Activated T-helper 2 cell treated with anti-CD3 and anti-CD28 coated beads, Interferon-gamma antibody, Interleukin-2, Interleukin-4, amounts not matched to agents 10 μg/mL and 5 μg/mL and 100 μg/mL, durations not matched to agents 14 hours and 24 hours and 36 hours (primary cell): ENCODE measurements at regions of chr1 and their contacts with region 1.

Region 1: GRCh38 chr1:172154551-172154950 is 265.9 kb upstream of the C1orf105 start:
- DNase-seq: no peak
- H3K4me3 Mint-ChIP-seq: peak overlapping the region; percentile 52
- H3K27ac Mint-ChIP-seq: peak overlapping the region; percentile 88
- H3K4me1 Mint-ChIP-seq: peaks cover 15% of the 10 kb centered on the region
- H3K27me3 Mint-ChIP-seq: no peaks in the 10 kb centered on the region

Region 2: DNA sequence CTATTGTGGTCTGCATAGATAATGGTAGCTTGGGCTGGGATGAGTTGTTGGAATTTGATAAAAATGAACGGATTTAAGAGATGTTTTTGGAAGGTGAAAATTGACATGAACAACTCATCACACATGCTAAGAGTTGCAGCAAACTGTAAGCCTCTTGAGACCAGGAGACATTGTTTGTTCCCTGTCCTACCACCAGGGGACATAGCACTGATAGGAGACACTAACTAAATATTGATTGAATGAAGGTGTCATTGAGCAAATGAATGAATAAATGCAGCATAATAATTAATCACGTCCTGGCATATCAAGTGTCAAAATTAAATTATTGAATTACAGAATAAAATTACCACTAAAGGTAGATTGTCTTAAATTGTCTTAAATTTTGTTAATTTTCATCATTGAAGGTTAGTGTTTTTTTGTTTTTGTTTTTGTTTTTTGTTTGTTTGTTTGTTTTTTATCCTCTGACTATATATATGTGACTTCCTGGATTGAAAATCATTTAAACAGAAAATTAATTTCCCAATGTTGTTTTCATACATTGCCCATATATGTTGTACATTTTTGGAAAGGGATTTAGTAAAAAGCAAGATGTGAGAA is 19.4 kb before region 1 on chr1:
- intact Hi-C with region 1: loop called (anchors 2 kb)
- DNase-seq: no peak
- H3K4me3 Mint-ChIP-seq: no peak overlapping the region
- H3K27ac Mint-ChIP-seq: no peak overlapping the region
- H3K4me1 Mint-ChIP-seq: peaks cover 20% of the 10 kb centered on the region
- H3K27me3 Mint-ChIP-seq: no peaks in the 10 kb centered on the region

Region 3: DNA sequence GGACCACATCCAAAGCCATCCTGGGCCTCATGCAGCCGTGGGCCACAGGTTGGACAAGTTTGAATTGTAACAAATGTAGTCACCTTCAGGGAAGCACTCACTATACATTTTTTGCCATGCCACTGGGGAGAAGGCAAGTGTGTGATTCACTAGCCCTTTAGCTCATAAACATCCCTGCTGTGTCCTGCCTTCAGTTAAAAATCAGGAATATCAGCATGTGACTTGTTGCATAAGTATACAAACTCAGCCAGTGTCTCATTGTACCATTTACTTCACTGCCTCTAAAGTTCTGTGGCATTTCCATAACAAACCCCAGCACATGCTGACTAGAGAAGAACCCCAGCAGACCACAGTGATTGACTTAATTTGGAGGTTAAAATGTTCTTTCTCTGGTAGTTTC is 123.9 kb after region 1 on chr1:
- intact Hi-C with region 1: loop called (anchors 10 kb)
- DNase-seq: no peak
- H3K4me3 Mint-ChIP-seq: no peak overlapping the region
- H3K27ac Mint-ChIP-seq: no peak overlapping the region
- H3K4me1 Mint-ChIP-seq: peaks cover 31% of the 10 kb centered on the region
- H3K27me3 Mint-ChIP-seq: no peaks in the 10 kb centered on the region